ENCODE measurements at regions of chr2 and their contacts with region 1.

Region 1: DNA sequence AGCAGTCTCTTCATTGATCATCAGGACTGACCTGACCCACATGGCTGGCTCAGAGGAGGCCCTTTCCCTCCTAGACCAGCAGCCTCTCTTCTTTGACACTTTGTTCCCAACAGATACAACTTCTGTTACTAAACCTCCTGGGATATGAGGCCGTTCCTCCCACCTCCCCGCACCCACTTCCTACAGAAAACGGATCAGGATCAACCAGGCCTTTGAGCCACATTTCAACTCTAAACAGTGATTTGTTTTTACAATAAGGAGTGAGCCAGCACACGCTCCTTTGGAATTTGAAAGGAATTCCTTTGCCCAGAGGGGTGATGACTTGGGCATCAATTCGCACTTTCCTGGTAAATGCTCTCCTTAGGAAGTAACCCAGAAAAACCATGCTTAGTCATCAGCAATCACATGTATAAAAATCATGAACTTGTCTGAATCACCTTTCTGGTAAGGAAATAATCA is 180.4 kb downstream of the FAM124B start:
- DNase-seq: peak; percentile 97
- ATAC-seq: peak; percentile 90
- H3K4me3 ChIP-seq: no peak overlapping the region
- H3K27ac ChIP-seq: peak overlapping the region; percentile 84
- H3K4me1 ChIP-seq: peaks cover 28% of the 10 kb centered on the region
- H3K27me3 ChIP-seq: no peaks in the 10 kb centered on the region
- CTCF ChIP-seq: no peak

Region 2: GRCh38 chr2:224039124-224039940 is 182.2 kb before region 1 on chr2 and contains the start of gene SERPINE2:
- CTCF ChIA-PET with region 1: no interaction called
- POLR2A ChIA-PET with region 1: no interaction called
- intact Hi-C with region 1: loop called (anchors 1 kb)
- DNase-seq: peak; percentile 69
- ATAC-seq: peak; percentile 74
- H3K4me3 ChIP-seq: peak within 1 kb of the TSS; percentile 72
- H3K27ac ChIP-seq: no peak within 1 kb of the TSS
- H3K4me1 ChIP-seq: peaks cover 16% of the 10 kb centered on the region
- H3K27me3 ChIP-seq: no peaks in the 10 kb centered on the region
- CTCF ChIP-seq: peak; percentile 70
- total RNA-seq, gene SERPINE2: 17.1 and 18.8 TPM in 2 replicates

Region 3: DNA sequence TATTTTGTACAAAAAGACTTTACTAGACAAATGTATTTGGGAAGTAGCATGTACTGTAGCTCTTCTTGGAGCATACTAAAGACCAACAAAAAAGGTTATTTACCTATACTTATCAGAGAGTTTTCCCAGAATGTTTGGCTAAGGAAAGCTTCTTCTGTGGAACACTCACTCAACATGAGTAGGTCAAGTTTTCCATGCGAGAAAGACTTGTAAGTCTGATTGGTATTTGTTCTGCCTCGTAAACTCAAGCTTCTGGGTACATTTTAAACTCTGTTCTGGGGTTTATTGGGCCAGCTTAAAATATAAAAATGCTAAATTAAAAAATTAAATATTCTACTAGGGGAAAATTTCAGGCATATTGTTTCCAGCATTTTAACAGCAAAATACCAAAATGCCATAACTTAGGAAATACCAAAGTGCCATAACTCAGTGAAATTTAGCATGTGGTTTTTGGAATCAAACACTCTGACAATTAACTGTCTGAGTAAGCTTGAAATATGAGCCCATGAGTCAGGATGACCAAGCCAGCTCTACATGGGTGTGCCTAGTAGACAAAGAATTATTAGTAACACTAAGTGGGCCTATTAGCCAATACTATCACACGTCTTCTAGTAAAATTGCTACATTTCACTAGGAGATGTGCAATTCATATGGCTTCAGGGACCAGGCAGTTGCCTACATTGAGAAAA is 135.1 kb before region 1 on chr2:
- CTCF ChIA-PET with region 1: no interaction called
- POLR2A ChIA-PET with region 1: interaction called, 5 read pairs
- intact Hi-C with region 1: loop called (anchors 1 kb)
- DNase-seq: peak; percentile 96
- ATAC-seq: peak; percentile 88
- H3K4me3 ChIP-seq: peak overlapping the region; percentile 55
- H3K27ac ChIP-seq: peak overlapping the region; percentile 97
- H3K4me1 ChIP-seq: peaks cover 35% of the 10 kb centered on the region
- H3K27me3 ChIP-seq: no peaks in the 10 kb centered on the region
- CTCF ChIP-seq: no peak

Region 4: DNA sequence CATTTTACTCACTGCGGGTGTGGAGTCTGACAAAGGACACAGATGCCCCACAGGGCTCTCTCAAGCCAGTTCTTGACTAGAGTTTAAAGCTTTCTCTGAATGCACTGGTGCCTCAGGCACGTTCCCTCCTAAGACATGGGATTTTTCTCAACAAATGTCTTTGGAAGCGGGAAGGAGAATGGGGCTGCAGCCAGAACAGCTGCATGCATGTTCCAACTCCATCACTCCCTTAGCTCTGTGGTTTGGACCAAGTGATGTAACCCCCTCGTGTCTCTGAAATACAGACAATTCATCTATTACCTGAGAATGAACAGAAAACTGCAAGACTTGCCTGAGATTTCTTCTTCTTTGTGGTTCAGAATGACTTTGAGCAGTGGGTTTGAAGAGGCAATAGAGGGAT is 40.7 kb before region 1 on chr2:
- CTCF ChIA-PET with region 1: no interaction called
- POLR2A ChIA-PET with region 1: no interaction called
- intact Hi-C with region 1: loop called (anchors 5 kb)
- DNase-seq: no peak
- ATAC-seq: no peak
- H3K4me3 ChIP-seq: no peak overlapping the region
- H3K27ac ChIP-seq: no peak overlapping the region
- H3K4me1 ChIP-seq: peaks cover 11% of the 10 kb centered on the region
- H3K27me3 ChIP-seq: no peaks in the 10 kb centered on the region
- CTCF ChIP-seq: no peak

Region 5: DNA sequence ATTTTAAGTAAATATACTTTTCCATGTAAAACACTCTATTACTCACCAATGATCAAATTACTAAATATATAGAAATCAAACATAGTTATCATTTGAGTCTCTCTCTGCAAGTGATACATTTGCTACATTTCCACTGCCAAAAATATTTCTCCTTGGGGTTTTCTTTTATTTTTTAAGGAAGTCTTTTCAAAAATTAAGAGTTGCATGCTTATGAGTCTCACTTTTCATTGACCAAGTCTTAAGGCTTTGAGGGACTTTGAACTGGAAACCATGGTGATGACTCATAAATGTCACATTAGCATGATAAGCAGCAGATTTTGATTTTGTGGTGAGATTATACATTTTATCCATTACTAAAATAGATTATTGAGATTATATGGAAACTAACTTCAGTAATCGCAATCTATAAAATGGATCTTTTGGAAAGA is 27.5 kb after region 1 on chr2:
- CTCF ChIA-PET with region 1: no interaction called
- POLR2A ChIA-PET with region 1: no interaction called
- intact Hi-C with region 1: loop called (anchors 2 kb)
- DNase-seq: peak; percentile 69
- ATAC-seq: peak; percentile 80
- H3K4me3 ChIP-seq: no peak overlapping the region
- H3K27ac ChIP-seq: peak overlapping the region; percentile 47
- H3K4me1 ChIP-seq: peaks cover 25% of the 10 kb centered on the region
- H3K27me3 ChIP-seq: no peaks in the 10 kb centered on the region
- CTCF ChIP-seq: no peak

Region 6: DNA sequence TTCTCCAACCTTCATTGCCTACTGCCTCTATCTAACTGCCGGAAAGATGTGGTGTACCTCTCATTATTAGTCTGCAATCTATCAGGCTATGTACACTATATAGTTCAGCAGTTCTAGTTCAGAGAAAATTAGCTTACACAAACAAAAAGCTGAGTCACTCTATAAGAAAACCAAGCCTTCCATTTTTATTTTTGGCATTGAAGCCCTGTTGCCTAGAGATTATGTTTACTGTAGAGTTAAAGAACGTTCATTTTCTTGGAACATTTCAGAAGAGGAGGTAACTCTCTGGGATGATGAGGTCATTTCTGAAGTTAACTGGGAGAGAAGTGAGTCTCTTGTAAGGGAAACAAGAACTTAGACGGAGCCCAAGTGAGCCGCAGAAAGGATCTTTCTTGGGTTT is 47.0 kb after region 1 on chr2:
- CTCF ChIA-PET with region 1: no interaction called
- POLR2A ChIA-PET with region 1: no interaction called
- intact Hi-C with region 1: loop called (anchors 2 kb)
- DNase-seq: peak; percentile 97
- ATAC-seq: peak; percentile 93
- H3K4me3 ChIP-seq: no peak overlapping the region
- H3K27ac ChIP-seq: peak overlapping the region; percentile 72
- H3K4me1 ChIP-seq: peaks cover 39% of the 10 kb centered on the region
- H3K27me3 ChIP-seq: no peaks in the 10 kb centered on the region
- CTCF ChIP-seq: no peak

Measured in PC-3 (cell line).